Heart left ventricle (tissue), 16 donors: ENCODE measurements at regions of chr6 and their contacts with region 1.

Region 1: DNA sequence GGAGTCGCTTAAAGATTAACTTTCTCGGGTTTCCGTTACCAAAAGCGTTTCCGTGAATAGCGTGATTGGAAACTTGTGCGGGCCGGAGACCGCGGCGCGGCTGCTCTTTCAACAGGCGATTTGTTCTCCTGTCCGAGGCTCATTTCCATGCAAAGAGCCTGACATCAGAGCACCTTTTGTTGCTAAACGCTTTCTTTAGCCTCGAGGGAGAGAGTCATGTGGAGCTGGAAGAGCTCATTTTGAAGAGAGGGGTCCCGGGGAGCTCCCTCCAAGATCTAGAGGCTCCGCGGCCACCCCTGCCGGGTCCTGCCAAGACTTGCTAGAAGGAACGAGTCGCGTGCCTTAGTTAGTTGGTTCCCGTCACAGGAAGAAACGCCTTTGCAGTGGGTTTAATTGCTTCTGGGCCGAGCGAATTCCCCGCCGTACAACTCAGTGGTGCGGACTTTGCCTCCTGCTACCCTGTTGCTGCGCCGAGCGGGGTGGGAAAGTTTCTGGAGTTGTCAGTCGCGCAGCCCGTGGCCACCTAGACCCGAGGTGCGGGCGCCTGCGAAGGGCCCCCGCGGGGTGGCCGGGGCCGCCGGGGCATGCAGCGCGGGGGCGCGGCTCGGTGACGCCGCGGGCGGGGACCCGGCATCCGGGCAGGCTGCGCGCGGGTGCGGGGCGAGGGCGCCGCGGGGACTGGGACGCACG is at the start of gene SASH1:
- DNase-seq: peak; percentile 68 to 83 (median 73)
- ATAC-seq: peak; percentile 75 to 88 (median 86)
- H3K4me3 ChIP-seq: peak within 1 kb of the TSS; percentile 45 to 89 (median 81)
- H3K27ac ChIP-seq: peak within 1 kb of the TSS; percentile 74 to 98 (median 92)
- H3K4me1 ChIP-seq: peaks cover 0 to 56% (median 26%) of the 10 kb centered on the region in 12 donors
- H3K27me3 ChIP-seq: no peaks in the 10 kb centered on the region
- CTCF ChIP-seq: no peak
- POLR2A ChIP-seq: peak in 1 of 2 donors; percentile 50
- total RNA-seq, gene SASH1: 19.0 to 47.5 (median 29.8) TPM

Region 2: DNA sequence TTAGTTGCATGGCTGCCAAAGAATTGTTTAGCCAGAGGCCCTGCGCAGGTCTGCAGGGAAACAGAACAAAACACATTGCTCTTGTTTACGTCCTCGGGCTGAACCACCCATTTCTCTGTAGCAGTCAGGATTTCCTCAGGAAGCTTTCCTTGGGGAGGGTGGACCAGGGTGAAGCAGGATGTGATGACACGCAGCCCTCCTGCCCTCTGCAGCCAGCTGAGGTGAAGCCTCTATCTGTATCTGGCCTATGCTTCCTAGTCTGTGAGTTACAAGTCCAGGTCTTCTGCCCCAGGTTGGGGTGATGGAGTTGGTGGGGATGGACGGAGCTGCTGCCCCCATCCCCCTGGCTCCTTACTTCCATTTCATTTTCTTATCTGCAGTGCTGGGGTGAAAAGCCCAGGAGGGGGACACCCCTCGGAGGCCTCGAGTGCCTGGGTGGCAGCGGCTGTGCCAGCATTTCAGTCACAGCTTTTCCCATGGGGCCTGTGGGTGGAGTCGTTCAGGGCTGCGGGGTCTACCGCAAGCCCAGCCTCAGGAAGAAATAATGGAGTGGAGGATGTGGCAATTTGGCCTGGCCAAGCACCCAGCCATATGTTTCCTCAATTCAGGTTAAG is 25.0 kb after region 1 on chr6:
- intact Hi-C with region 1: loop called in 1 of 10 experiments (anchors 1 kb)
- DNase-seq: peak; percentile 72 to 81 (median 75)
- ATAC-seq: peak; percentile 77 to 91 (median 88)
- H3K4me3 ChIP-seq: peak overlapping the region in 1 of 12 donors; percentile 12
- H3K27ac ChIP-seq: peak overlapping the region; percentile 67 to 96 (median 86)
- H3K4me1 ChIP-seq: peaks cover 6 to 94% (median 63%) of the 10 kb centered on the region in 12 donors
- H3K27me3 ChIP-seq: no peaks in the 10 kb centered on the region
- CTCF ChIP-seq: no peak
- POLR2A ChIP-seq: no peak

Region 3: GRCh38 chr6:148379966-148380713 is 37.6 kb after region 1 on chr6:
- intact Hi-C with region 1: no loop called
- DNase-seq: no peak
- ATAC-seq: peak in 1 of 4 donors; percentile 55
- H3K4me3 ChIP-seq: no peak overlapping the region
- H3K27ac ChIP-seq: peak overlapping the region in 8 of 12 donors; percentile 1 to 58 (median 22)
- H3K4me1 ChIP-seq: peaks cover 0 to 78% (median 28%) of the 10 kb centered on the region in 12 donors
- H3K27me3 ChIP-seq: no peaks in the 10 kb centered on the region
- CTCF ChIP-seq: no peak
- POLR2A ChIP-seq: no peak

Region 4: DNA sequence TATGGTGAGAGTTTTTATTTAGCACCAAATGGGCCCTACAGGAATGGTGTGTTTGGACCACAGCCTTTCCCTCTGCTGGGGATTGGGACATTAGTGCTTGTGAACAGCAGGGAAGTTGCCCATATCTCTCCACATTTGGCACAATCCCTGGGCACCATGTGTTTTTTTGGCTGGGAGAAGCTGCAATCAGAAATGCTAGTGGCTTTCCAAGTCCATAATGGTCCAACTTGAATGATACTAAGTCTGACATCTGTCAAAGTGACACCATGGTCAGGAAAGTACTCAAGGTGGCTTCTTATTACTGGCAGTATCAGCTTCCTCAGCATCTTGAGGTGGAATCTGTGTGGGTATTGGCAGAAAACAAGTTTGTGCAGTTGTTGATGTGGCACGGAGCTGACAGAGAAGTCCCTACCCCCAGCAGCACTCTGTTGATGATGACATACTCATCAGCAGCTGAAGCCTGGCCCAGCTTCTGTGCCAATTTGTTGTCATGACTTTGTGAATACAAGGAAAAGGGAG is 53.1 kb after region 1 on chr6:
- intact Hi-C with region 1: loop called in 6 of 10 experiments (anchors 5 to 10 kb)
- DNase-seq: peak in 4 of 5 donors; percentile 35 to 61 (median 58)
- ATAC-seq: peak; percentile 81 to 89 (median 86)
- H3K4me3 ChIP-seq: no peak overlapping the region
- H3K27ac ChIP-seq: peak overlapping the region; percentile 20 to 79 (median 52)
- H3K4me1 ChIP-seq: peaks cover 7 to 71% (median 46%) of the 10 kb centered on the region in 12 donors
- H3K27me3 ChIP-seq: no peaks in the 10 kb centered on the region
- CTCF ChIP-seq: no peak
- POLR2A ChIP-seq: no peak

Region 5: GRCh38 chr6:148407372-148407771 is 64.9 kb after region 1 on chr6:
- intact Hi-C with region 1: loop called in 1 of 10 experiments (anchors 10 kb)
- DNase-seq: peak in 2 of 5 donors; percentile 39 to 46
- ATAC-seq: peak in 3 of 4 donors; percentile 68 to 87 (median 77)
- H3K4me3 ChIP-seq: no peak overlapping the region
- H3K27ac ChIP-seq: peak overlapping the region in 10 of 12 donors; percentile 6 to 60 (median 35)
- H3K4me1 ChIP-seq: peaks cover 0 to 40% (median 23%) of the 10 kb centered on the region in 12 donors
- H3K27me3 ChIP-seq: no peaks in the 10 kb centered on the region
- CTCF ChIP-seq: no peak
- POLR2A ChIP-seq: no peak